ENCODE measurements at regions of chr11 and their contacts with region 1.

Region 1: GRCh38 chr11:126989942-126990715 is 10.4 kb downstream of the KIRREL3 start:
- DNase-seq: peak; percentile 94
- ATAC-seq: peak; percentile 99
- H3K4me3 Mint-ChIP-seq: peak overlapping the region; percentile 8; the same call in 1 of the 2 replicates
- H3K27ac Mint-ChIP-seq: no peak overlapping the region
- H3K4me1 Mint-ChIP-seq: peaks cover 9% of the 10 kb centered on the region; the same call in 1 of the 2 replicates
- H3K27me3 Mint-ChIP-seq: no peaks in the 10 kb centered on the region; the same call in none of the 2 replicates
- CTCF ChIP-seq: peak; percentile 92

Region 2: DNA sequence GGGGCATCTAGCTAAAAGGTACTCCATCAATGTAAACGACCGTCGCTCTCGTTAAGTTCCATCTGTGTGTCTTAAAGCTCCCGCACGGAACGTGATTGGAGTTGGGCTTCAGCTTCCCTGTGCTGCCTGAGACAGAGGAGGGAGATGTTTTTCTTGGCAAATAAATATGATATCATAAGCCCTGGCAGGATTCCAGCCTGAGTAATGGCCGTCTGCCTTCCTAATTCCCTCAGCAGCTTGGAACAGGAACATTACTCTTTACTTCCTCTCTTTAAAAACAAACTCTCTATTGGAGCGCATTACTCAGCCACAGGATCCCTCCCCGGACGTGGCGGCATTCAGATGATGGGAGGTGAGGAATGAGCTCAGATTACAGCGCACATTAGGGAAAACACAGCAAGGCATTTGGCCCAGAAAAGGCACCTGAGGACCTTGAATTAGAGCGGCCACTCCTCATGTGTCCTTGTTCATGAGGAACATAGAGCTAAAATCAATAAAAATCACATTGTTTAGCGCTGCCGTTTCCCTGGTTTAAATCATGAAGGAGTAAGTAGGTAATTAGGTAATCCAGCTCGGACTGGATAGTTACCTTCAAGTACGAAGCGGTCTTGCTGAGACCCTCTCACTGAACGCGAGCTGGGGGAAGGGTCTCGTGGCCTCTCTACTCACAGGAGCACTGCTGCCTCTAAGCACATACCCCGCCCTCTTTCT is 404.2 kb before region 1 on chr11:
- CTCF ChIA-PET with region 1: interaction called, 13 read pairs
- POLR2A ChIA-PET with region 1: no interaction called
- DNase-seq: peak; percentile 53
- ATAC-seq: peak; percentile 82
- H3K4me3 Mint-ChIP-seq: no peak overlapping the region
- H3K27ac Mint-ChIP-seq: no peak overlapping the region
- H3K4me1 Mint-ChIP-seq: peaks cover 13% of the 10 kb centered on the region
- H3K27me3 Mint-ChIP-seq: no peaks in the 10 kb centered on the region; the same call in 1 of the 2 replicates
- CTCF ChIP-seq: no peak

Region 3: GRCh38 chr11:126716456-126717083 is 273.6 kb before region 1 on chr11:
- CTCF ChIA-PET with region 1: interaction called, 43 read pairs
- POLR2A ChIA-PET with region 1: no interaction called
- DNase-seq: peak; percentile 74
- ATAC-seq: peak; percentile 79
- H3K4me3 Mint-ChIP-seq: no peak overlapping the region
- H3K27ac Mint-ChIP-seq: no peak overlapping the region
- H3K4me1 Mint-ChIP-seq: peaks cover 24% of the 10 kb centered on the region
- H3K27me3 Mint-ChIP-seq: 0 out of 2 replicates have a peak, but pooled peaks cover 4% of the 10 kb centered on the region
- CTCF ChIP-seq: peak; percentile 56

Region 4: GRCh38 chr11:126819194-126819593 is 170.9 kb before region 1 on chr11:
- CTCF ChIA-PET with region 1: interaction called, 11 read pairs
- POLR2A ChIA-PET with region 1: no interaction called
- DNase-seq: no peak
- ATAC-seq: no peak
- H3K4me3 Mint-ChIP-seq: no peak overlapping the region
- H3K27ac Mint-ChIP-seq: no peak overlapping the region
- H3K4me1 Mint-ChIP-seq: peaks cover 27% of the 10 kb centered on the region
- H3K27me3 Mint-ChIP-seq: peaks cover 23% of the 10 kb centered on the region
- CTCF ChIP-seq: no peak

Region 5: DNA sequence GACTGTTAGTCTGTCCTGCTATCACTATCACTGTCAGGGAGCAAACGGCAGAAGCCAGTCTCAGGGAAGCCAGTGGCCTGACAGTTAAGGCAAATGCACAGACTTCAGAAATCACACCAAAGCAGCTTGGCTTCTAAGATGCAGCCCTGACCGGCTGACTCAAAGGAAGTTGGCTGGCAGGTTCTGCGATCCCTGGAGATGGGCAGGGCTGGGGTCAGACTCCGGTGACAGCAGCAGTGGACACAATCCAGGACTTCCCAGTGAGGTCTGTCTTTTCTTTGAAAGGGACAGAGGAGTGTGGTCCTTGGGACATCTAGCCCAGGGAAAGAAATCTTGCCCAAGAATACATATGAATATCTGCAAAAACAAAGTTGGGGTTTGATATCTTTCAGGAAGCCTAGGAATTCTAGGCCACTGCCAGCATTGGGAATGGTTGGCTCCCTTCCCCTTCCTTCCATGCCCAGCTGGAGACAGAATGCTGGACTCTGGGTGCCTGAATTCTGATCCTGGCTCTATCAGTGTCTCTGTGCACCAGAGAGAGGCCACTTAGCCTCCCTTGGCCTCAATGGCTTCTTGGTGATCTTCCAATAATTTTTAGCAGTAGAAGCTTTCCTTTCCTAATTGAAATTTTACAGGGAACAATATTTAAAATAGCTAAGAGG is 98.4 kb before region 1 on chr11:
- CTCF ChIA-PET with region 1: interaction called, 24 read pairs
- POLR2A ChIA-PET with region 1: no interaction called
- DNase-seq: no peak
- ATAC-seq: no peak
- H3K4me3 Mint-ChIP-seq: no peak overlapping the region
- H3K27ac Mint-ChIP-seq: no peak overlapping the region
- H3K4me1 Mint-ChIP-seq: peaks cover 36% of the 10 kb centered on the region
- H3K27me3 Mint-ChIP-seq: no peaks in the 10 kb centered on the region; the same call in 1 of the 2 replicates
- CTCF ChIP-seq: no peak

Region 6: GRCh38 chr11:127003260-127003981 is 13.3 kb after region 1 on chr11:
- CTCF ChIA-PET with region 1: interaction called, 66 read pairs
- POLR2A ChIA-PET with region 1: interaction called, 4 read pairs
- DNase-seq: peak; percentile 83
- ATAC-seq: peak; percentile 85
- H3K4me3 Mint-ChIP-seq: peak overlapping the region; percentile 71
- H3K27ac Mint-ChIP-seq: no peak overlapping the region
- H3K4me1 Mint-ChIP-seq: peaks cover 29% of the 10 kb centered on the region
- H3K27me3 Mint-ChIP-seq: peaks cover 18% of the 10 kb centered on the region
- CTCF ChIP-seq: peak; percentile 15; the same call in 1 of the 2 replicates

Region 7: DNA sequence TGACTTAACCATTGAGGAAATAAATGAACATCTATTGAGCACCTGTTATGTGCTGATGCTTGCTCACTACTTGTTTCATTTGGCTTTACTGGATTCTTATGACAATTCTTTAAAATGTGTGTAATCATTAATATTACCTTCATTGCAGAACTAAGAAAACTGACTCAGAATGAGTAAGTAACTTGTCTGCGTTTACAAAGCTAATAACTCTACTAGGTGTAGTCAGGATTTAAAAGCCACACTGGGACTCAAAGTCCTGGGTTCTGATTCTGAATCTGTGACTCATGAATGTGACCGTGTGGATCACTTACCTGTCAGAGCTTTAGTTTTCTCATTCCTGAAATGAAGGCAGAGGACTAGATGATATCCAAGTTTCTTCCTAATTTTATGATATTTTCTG is 33.9 kb after region 1 on chr11:
- CTCF ChIA-PET with region 1: no interaction called
- POLR2A ChIA-PET with region 1: no interaction called
- DNase-seq: no peak
- ATAC-seq: no peak
- H3K4me3 Mint-ChIP-seq: no peak overlapping the region
- H3K27ac Mint-ChIP-seq: no peak overlapping the region
- H3K4me1 Mint-ChIP-seq: peaks cover 2% of the 10 kb centered on the region; the same call in 1 of the 2 replicates
- H3K27me3 Mint-ChIP-seq: no peaks in the 10 kb centered on the region; the same call in 1 of the 2 replicates
- CTCF ChIP-seq: no peak